Calu3 (cell line): ENCODE measurements at regions of chrX and their contacts with region 1.

Region 1: DNA sequence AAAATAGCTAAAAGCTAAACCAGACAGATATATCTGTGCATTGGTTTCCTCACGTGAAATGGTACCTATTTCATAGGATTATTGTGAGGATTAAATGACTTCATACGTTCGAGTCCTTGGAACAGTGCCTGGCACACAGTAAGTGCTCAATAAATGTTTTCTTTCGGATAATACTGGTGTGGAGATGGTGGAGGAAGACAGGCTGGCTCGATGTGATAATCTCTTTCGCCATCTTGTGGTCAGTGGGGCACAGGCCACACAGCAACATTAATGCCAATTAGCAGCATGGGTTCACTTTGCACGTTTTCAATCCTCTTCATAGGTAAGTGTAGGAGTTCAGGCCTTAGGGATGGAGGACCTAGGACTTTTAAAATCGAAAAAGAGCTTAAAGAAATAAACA is 9.3 kb downstream of the PAGE4 start:
- DNase-seq: peak; percentile 30
- H3K4me3 Mint-ChIP-seq: no peak overlapping the region
- H3K27ac Mint-ChIP-seq: no peak overlapping the region
- H3K4me1 Mint-ChIP-seq: no peaks in the 10 kb centered on the region
- H3K27me3 Mint-ChIP-seq: peaks cover 33% of the 10 kb centered on the region
- CTCF ChIP-seq: peak; percentile 18

Region 2: DNA sequence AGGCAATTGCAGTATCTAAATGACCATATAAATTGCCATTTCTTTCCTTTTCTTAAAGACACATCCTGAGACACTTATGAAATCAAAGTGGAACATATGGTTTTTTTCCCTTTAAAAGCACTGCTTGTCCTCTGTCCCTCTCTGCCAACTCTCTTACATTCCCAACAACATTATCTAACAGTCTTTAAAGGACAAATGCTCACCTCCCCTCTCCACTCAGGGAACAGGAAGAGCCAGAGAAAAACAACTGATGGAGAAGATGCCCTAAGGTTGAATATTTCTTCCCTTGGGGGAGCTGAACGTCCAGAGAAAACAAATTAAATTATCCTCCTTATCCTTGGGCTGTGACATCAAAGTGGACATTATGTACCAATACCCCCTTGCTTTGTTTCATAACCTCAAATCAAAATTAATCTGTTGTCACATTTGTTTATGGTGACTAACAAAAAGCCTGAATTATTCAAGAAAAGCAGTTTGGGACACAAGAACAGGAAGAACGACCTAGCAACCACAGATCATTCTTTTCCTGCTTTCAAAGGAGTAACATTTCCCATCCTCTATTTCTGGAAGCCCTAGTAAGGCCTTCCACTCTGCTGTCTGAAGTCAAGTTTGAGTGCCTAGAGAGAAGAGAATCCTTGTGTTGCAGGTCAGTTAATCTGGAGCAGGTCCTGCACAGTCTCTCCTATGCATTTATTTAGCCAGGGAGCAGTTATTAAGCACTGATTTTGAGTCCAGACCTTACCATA is 90.0 kb before region 1 on chrX:
- CTCF ChIA-PET with region 1: interaction called, 11 read pairs
- intact Hi-C with region 1: no loop called
- DNase-seq: no peak
- H3K4me3 Mint-ChIP-seq: no peak overlapping the region
- H3K27ac Mint-ChIP-seq: no peak overlapping the region
- H3K4me1 Mint-ChIP-seq: no peaks in the 10 kb centered on the region
- H3K27me3 Mint-ChIP-seq: peaks cover 58% of the 10 kb centered on the region
- CTCF ChIP-seq: no peak

Region 3: GRCh38 chrX:50093625-50094024 is 255.3 kb after region 1 on chrX:
- CTCF ChIA-PET with region 1: no interaction called
- intact Hi-C with region 1: no loop called
- DNase-seq: no peak
- H3K4me3 Mint-ChIP-seq: no peak overlapping the region
- H3K27ac Mint-ChIP-seq: peak overlapping the region; percentile 23
- H3K4me1 Mint-ChIP-seq: peaks cover 9% of the 10 kb centered on the region
- H3K27me3 Mint-ChIP-seq: no peaks in the 10 kb centered on the region
- CTCF ChIP-seq: no peak

Region 4: DNA sequence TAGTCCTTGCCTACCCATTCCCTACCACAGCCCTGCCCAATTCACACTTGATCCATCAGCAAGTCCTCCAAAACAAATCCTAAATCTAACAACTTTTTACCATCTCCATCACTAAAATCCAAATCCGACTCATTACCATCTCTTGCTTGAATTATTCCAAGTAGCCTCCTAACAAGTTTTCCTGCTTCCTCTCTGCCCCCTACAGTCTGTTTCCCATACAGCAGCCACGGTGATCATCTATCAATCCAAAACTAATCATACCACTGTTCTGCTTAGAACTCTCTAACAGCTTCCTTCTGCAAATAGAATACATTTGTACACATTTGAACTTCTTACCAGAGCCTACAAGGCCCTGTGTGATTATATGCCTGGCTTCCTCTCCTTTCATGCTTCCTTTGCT is 842.6 kb after region 1 on chrX:
- CTCF ChIA-PET with region 1: no interaction called
- intact Hi-C with region 1: no loop called
- DNase-seq: peak; percentile 5
- H3K4me3 Mint-ChIP-seq: no peak overlapping the region
- H3K27ac Mint-ChIP-seq: no peak overlapping the region
- H3K4me1 Mint-ChIP-seq: no peaks in the 10 kb centered on the region
- H3K27me3 Mint-ChIP-seq: no peaks in the 10 kb centered on the region
- CTCF ChIP-seq: no peak